ENCODE measurements at regions of chr2 and their contacts with region 1.

Region 1: GRCh38 chr2:191150600-191151330 is at the start of gene STAT4:
- DNase-seq: peak; percentile 52 to 96 (median 72)
- ATAC-seq: peak; percentile 83
- H3K4me3 ChIP-seq: peak within 1 kb of the TSS; percentile 83
- H3K4me3 Mint-ChIP-seq: peak within 1 kb of the TSS; percentile 89
- H3K27ac ChIP-seq: peak within 1 kb of the TSS; percentile 93
- H3K27ac Mint-ChIP-seq: peak within 1 kb of the TSS; percentile 96
- H3K4me1 ChIP-seq: peaks cover 33% of the 10 kb centered on the region
- H3K4me1 Mint-ChIP-seq: peaks cover 50% of the 10 kb centered on the region
- H3K27me3 ChIP-seq: no peaks in the 10 kb centered on the region
- H3K27me3 Mint-ChIP-seq: no peaks in the 10 kb centered on the region
- CTCF ChIP-seq: no peak
- total RNA-seq, gene STAT4: 77.1 to 83.0 TPM

Region 2: GRCh38 chr2:190781604-190782198 is 369.1 kb before region 1 on chr2:
- CTCF ChIA-PET with region 1: no interaction called
- POLR2A ChIA-PET with region 1: no interaction called
- intact Hi-C with region 1: loop called in 1 of 2 experiments (anchors 10 kb)
- DNase-seq: peak in 12 of 14 experiments; percentile 15 to 76 (median 29)
- ATAC-seq: peak; percentile 70
- H3K4me3 ChIP-seq: no peak overlapping the region
- H3K4me3 Mint-ChIP-seq: no peak overlapping the region
- H3K27ac ChIP-seq: no peak overlapping the region
- H3K27ac Mint-ChIP-seq: no peak overlapping the region
- H3K4me1 ChIP-seq: peaks cover 2% of the 10 kb centered on the region
- H3K4me1 Mint-ChIP-seq: no peaks in the 10 kb centered on the region
- H3K27me3 ChIP-seq: no peaks in the 10 kb centered on the region
- H3K27me3 Mint-ChIP-seq: no peaks in the 10 kb centered on the region
- CTCF ChIP-seq: peak; percentile 65

Region 3: DNA sequence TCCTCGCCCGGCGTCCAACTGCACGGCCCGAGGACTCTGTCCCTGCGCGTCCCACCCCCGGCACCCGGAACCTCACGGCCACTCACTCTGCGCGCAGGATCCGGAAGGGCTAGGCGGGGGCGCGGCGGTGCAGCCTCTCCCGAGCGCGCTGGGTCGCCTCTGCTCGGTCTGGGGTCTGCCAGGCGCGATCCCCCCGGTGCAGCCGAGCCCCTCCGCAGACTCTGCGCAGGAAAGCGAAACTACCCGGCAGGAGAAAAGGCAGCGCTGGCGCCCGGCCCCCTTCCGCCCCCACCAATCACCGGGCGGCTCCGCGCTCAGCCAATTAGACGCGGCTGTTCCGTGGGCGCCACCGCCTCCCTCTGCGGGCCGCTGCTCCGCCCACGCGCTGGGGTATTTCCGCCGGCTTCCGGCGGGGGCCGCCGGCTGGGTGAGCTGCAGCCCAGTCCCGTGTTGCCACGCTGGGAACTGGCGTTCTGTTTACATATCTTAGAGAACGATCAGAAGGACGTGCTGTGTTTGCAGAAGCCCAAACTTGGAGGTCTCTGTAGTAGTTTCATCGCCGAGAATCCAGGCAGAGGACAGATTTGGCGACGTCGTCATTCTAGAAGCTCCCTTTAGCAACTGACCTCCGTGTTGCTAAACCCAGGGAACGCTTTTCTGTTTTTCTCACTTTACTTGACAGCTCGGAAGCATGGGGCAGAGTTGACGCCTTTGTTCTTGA is 136.7 kb before region 1 on chr2 and contains the start of gene STAT1:
- CTCF ChIA-PET with region 1: interaction called, 3 read pairs
- POLR2A ChIA-PET with region 1: interaction called, 24 read pairs
- intact Hi-C with region 1: no loop called
- DNase-seq: peak; percentile 89 to 99 (median 96)
- ATAC-seq: peak; percentile 84
- H3K4me3 ChIP-seq: peak within 1 kb of the TSS; percentile 75
- H3K4me3 Mint-ChIP-seq: no peak within 1 kb of the TSS
- H3K27ac ChIP-seq: peak within 1 kb of the TSS; percentile 89 to 91
- H3K27ac Mint-ChIP-seq: no peak within 1 kb of the TSS
- H3K4me1 ChIP-seq: peaks cover 54% of the 10 kb centered on the region
- H3K4me1 Mint-ChIP-seq: peaks cover 43% of the 10 kb centered on the region
- H3K27me3 ChIP-seq: no peaks in the 10 kb centered on the region
- H3K27me3 Mint-ChIP-seq: no peaks in the 10 kb centered on the region
- CTCF ChIP-seq: no peak
- total RNA-seq, gene STAT1: 56.6 to 57.8 TPM

Region 4: DNA sequence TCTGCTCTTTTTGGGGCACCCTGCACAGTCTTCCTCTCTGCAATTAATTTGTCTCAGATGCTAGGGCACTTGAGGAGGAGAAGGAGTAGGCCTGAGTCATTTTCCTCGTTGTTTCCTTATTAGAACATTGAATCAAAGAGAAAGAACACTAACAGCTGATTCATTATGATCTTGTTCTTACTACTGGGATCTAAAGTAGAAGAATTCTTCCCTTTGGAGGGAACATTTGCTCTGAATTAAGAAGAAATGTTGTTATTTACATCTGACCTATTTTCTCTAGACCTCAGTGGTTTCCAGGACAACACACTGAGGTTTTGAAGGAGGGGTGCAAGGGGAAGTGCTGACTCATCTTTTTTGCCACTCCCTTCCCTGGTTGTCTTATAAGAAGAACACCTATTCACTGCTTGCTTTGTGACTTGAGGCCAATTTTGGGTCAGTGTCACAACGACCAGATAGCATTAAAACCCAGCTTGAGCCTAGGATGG is 112.5 kb before region 1 on chr2:
- CTCF ChIA-PET with region 1: interaction called, 19 read pairs
- POLR2A ChIA-PET with region 1: interaction called, 3 read pairs
- intact Hi-C with region 1: no loop called
- DNase-seq: peak in 8 of 14 experiments; percentile 12 to 77 (median 36)
- ATAC-seq: peak; percentile 68
- H3K4me3 ChIP-seq: no peak overlapping the region
- H3K4me3 Mint-ChIP-seq: peak overlapping the region; percentile 3
- H3K27ac ChIP-seq: peak overlapping the region in 1 of 2 donors; percentile 59
- H3K27ac Mint-ChIP-seq: peak overlapping the region; percentile 80
- H3K4me1 ChIP-seq: peaks cover 27% of the 10 kb centered on the region
- H3K4me1 Mint-ChIP-seq: peaks cover 18% of the 10 kb centered on the region
- H3K27me3 ChIP-seq: no peaks in the 10 kb centered on the region
- H3K27me3 Mint-ChIP-seq: no peaks in the 10 kb centered on the region
- CTCF ChIP-seq: no peak

Region 5: DNA sequence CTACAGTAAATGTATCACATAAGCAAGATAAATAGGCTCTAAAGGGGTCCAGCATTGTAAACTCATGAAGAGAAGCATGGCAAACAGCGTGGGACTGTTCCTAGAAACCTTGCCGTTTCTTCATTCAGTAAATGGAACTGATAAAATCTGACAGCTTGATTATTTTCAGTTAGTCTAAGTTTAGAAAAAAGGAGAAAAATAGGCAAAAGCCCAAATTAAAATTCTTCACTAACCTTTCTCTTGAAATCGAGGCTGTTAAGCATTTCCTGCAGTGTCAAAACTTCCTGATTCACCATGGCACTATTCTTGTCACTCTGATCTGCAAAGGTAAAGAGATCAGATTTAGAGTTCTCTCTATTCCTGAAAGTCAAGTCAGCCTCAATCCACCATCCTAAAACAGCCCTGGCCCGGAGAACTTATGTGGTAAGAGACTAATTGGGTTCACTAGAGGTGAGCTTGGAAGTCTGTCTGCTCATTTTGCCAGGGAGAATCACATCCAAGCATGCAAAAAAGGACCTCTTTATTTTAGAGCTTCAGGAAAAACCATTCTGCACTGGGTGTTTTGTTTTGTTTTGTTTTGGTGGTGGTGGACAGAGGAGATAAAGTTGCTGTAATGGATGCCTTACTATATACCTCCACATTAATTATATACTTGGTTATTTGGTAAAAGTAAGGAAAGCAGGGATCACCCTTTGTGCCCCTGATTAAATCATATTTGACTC is 84.4 kb before region 1 on chr2:
- CTCF ChIA-PET with region 1: interaction called, 7 read pairs
- POLR2A ChIA-PET with region 1: interaction called, 33 read pairs
- intact Hi-C with region 1: no loop called
- DNase-seq: peak in 2 of 14 experiments; percentile 25 to 49
- ATAC-seq: peak; percentile 30
- H3K4me3 ChIP-seq: peak overlapping the region; percentile 3
- H3K4me3 Mint-ChIP-seq: peak overlapping the region; percentile 73
- H3K27ac ChIP-seq: peak overlapping the region; percentile 14 to 42
- H3K27ac Mint-ChIP-seq: peak overlapping the region; percentile 85
- H3K4me1 ChIP-seq: peaks cover 26% of the 10 kb centered on the region
- H3K4me1 Mint-ChIP-seq: peaks cover 81% of the 10 kb centered on the region
- H3K27me3 ChIP-seq: no peaks in the 10 kb centered on the region
- H3K27me3 Mint-ChIP-seq: no peaks in the 10 kb centered on the region
- CTCF ChIP-seq: no peak

Region 6: DNA sequence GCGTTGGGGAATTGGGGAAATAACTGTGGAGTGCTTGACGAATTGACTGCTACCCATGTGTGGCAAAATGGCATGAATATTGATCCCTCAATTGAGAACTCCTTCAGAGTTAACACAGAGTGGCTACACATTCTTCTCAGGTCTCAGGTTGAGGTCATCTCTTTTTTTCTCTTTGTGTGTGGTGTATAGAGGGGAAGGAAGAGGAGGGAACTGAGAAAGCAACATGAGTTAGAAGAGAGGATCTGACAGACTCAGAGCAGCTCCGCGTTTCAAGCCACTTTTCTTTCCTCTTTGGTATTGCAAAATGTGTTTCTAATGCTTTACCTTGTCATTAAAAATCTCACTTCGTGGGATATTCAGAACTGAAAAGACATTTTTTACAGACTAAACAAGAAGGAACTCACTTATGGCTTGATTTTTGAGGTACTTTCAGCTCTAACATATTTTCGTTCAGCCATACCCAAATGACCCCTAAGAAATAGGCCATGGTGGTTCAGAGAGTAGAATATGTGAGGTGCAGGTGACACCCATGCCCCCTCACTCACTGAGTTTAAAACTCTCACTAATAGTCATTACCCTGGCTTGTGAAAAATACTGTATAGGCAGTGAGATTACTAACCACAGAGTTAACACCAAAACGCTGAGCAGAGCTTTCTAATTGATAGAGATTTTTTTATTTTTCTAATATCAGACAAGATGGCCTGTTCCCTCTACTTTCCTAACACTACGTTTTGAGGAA is 22.4 kb before region 1 on chr2:
- CTCF ChIA-PET with region 1: no interaction called
- POLR2A ChIA-PET with region 1: interaction called, 22 read pairs
- intact Hi-C with region 1: no loop called
- DNase-seq: peak in 3 of 14 experiments; percentile 34 to 75 (median 47)
- ATAC-seq: peak; percentile 54
- H3K4me3 ChIP-seq: no peak overlapping the region
- H3K4me3 Mint-ChIP-seq: no peak overlapping the region
- H3K27ac ChIP-seq: peak overlapping the region; percentile 10 to 43
- H3K27ac Mint-ChIP-seq: peak overlapping the region; percentile 60
- H3K4me1 ChIP-seq: peaks cover 17% of the 10 kb centered on the region
- H3K4me1 Mint-ChIP-seq: peaks cover 58% of the 10 kb centered on the region
- H3K27me3 ChIP-seq: no peaks in the 10 kb centered on the region
- H3K27me3 Mint-ChIP-seq: no peaks in the 10 kb centered on the region
- CTCF ChIP-seq: no peak

Region 7: DNA sequence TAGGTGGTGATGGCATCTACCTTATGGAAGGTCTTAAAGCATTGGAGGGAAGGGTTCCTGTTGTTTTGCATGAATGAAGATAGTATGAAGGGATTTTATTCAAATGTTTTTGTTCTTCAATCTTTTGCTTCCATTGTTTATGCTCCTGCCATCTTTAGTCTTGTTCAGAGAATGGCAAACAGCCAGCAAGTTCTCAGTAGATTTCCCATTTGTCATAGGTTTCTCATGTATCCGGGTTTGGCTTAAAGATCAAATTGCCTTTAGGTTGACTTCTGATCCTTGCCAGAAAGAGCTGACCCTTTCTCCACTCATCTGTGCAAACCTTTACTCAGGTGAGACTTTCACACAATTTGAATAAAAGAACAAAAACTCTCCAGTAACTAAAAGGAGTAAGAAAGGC is 44.3 kb after region 1 on chr2:
- CTCF ChIA-PET with region 1: no interaction called
- POLR2A ChIA-PET with region 1: no interaction called
- intact Hi-C with region 1: no loop called
- DNase-seq: no peak
- ATAC-seq: no peak
- H3K4me3 ChIP-seq: no peak overlapping the region
- H3K4me3 Mint-ChIP-seq: no peak overlapping the region
- H3K27ac ChIP-seq: peak overlapping the region; percentile 29 to 37
- H3K27ac Mint-ChIP-seq: peak overlapping the region; percentile 81
- H3K4me1 ChIP-seq: peaks cover 24% of the 10 kb centered on the region
- H3K4me1 Mint-ChIP-seq: peaks cover 59% of the 10 kb centered on the region
- H3K27me3 ChIP-seq: no peaks in the 10 kb centered on the region
- H3K27me3 Mint-ChIP-seq: no peaks in the 10 kb centered on the region
- CTCF ChIP-seq: no peak

Measured in CD4-positive, alpha-beta T cell (primary cell).